Gastrocnemius medialis (tissue), 4 donors: ENCODE measurements at regions of chr3 and their contacts with region 1.

Region 1: GRCh38 chr3:128426128-128426921 is 40.4 kb downstream of the DNAJB8 start:
- DNase-seq: no peak
- ATAC-seq: peak; percentile 78 to 81
- H3K4me3 ChIP-seq: peak overlapping the region in 3 of 4 donors; percentile 24 to 40 (median 35)
- H3K27ac ChIP-seq: no peak overlapping the region
- H3K4me1 ChIP-seq: no peaks in the 10 kb centered on the region
- H3K27me3 ChIP-seq: peaks cover 0 to 5% (median 0%) of the 10 kb centered on the region in 3 donors
- CTCF ChIP-seq: peak; percentile 68 to 99 (median 94)
- POLR2A ChIP-seq: no peak

Region 2: DNA sequence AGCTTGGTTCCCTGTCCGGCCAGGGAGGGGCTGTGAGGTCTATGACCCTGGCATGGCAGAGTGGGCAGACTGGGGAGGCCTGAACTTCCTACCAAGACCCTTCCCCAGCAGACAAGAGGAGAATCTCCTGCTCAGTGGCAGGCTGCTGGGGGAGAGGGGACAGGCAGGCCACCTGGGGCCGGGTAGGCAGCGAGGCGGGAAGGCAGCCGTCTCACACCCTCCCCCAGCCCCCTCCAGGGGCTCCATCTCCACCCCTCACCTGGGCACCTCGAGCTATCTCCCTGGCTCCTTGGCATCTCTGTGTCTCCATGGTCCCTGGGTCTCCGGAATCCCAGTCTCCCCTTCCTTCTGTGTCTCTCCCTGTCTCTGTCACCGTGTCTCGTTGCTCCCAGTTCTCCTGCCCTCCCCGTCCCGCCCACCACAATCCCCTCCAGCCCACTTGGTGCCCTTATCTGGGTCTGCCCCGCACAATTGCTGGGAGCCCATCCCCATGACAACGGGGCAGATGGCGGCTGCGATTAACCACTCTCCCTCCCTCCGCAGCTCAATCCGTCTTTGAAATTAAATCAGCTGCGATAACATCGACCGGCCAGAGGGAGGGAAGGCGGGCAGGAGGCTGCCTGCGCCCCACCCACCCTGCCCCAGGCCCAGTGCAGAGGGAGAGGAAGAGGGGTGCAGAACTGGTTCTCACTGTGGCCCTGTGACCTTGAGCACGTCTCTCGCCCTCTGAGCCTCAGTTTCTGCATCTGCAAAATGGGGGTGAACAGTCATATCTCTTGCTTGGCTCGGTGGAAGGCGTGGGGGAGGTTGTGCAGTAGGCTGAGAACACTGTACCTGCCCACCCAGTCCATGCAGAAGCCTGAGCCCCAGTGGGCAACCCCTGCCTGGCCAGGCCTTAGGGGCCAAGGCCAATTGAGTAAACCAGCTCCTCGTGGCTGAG is 30.7 kb after region 1 on chr3:
- in situ Hi-C with region 1: no loop called
- intact Hi-C with region 1: no loop called
- DNase-seq: no peak
- ATAC-seq: no peak
- H3K4me3 ChIP-seq: no peak overlapping the region
- H3K27ac ChIP-seq: no peak overlapping the region
- H3K4me1 ChIP-seq: no peaks in the 10 kb centered on the region
- H3K27me3 ChIP-seq: peaks cover 0 to 7% (median 0%) of the 10 kb centered on the region in 3 donors
- CTCF ChIP-seq: no peak
- POLR2A ChIP-seq: no peak

Region 3: GRCh38 chr3:128584412-128585020 is 158.2 kb after region 1 on chr3:
- in situ Hi-C with region 1: loop called in 1 of 4 experiments (anchors 25 kb)
- intact Hi-C with region 1: no loop called
- DNase-seq: peak in 1 of 2 donors; percentile 31
- ATAC-seq: peak; percentile 44 to 64
- H3K4me3 ChIP-seq: no peak overlapping the region
- H3K27ac ChIP-seq: no peak overlapping the region
- H3K4me1 ChIP-seq: no peaks in the 10 kb centered on the region
- H3K27me3 ChIP-seq: no peaks in the 10 kb centered on the region
- CTCF ChIP-seq: peak; percentile 44 to 67 (median 61)
- POLR2A ChIP-seq: no peak

Region 4: DNA sequence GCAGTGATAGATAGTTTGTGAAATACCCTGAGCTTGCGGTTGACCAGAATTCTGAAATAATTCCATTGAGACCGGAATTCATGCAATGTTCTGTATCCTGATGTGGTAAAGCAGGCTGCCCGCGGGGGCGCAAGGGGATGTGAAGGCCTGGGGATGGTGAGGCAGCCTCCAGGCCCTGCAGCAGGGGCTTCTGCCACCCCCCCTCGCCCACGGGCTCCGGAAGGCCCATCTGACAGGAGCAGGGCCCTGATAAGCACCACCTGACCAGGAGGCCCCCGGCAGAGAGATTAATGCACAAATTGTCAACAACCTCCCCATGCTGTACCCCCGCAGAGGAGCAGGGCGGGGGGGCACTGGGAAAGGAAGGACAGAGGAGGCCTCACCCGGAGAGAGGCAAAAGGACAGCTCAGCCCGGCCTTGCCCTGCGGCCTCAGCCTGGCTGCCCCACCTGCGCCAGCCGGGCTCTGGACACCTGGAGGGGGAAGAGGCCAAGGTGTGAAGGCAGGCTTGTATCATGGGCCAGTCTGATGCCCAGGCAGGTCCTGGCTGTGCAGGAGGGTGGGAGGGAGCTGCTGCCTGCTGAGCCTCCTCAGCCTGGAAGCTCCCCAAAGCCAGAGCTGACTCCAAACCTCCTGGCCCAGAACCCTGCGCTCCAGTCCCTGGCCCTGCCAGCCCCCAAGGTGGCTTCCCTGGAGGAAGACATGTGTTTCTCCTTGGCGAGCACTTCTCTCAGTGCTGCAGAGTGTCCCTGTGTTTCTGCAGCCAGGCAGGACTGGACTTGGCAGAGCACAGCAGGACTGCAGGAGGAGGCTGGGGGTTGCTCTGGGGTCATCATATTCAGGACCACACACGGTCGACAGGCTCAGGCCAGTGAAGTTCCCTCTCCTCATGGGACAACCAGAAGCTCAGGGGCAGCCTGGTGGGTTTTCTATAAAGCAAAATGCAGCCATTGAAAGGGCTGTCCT is 177.8 kb after region 1 on chr3:
- in situ Hi-C with region 1: loop called (anchors 10 to 25 kb)
- intact Hi-C with region 1: loop called (anchors 1 kb)
- DNase-seq: no peak
- ATAC-seq: no peak
- H3K4me3 ChIP-seq: no peak overlapping the region
- H3K27ac ChIP-seq: no peak overlapping the region
- H3K4me1 ChIP-seq: peaks cover 7 to 13% of the 10 kb centered on the region in 2 donors
- H3K27me3 ChIP-seq: no peaks in the 10 kb centered on the region
- CTCF ChIP-seq: no peak
- POLR2A ChIP-seq: no peak

Region 5: DNA sequence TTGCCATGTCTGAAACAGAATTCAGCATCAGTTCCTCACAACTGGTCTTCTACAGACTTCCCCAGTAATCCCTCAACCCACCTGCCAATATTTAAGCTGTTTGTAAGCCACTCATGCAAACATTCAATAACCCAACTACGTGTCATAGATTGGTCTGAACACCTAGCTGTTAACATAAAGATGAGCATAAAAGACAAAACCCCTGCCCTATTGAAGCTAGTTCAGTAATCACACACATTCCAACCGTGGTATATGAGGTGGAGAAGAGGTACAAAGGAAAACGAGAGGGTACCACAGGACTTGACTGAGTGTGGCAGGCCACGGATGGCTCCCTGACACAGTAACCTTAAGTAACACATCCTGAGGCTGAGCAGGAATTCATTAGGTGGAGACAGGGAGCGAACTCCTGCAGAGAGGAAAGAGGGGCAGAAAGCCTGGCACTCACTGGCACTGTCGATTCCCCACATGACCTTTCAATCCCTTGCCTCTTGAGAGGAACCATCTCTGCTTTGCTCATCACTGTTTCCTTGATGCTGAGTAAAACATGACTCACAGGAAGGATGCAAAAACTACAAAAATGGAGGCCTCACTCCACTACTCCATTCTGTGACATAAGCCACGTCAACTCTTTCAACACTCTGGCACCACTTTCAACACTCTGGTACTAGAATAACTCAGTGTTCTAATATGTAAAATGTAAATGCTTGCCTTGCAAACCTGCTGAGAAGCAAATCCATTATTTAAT is 193.0 kb after region 1 on chr3:
- in situ Hi-C with region 1: no loop called
- intact Hi-C with region 1: no loop called
- DNase-seq: no peak
- ATAC-seq: no peak
- H3K4me3 ChIP-seq: peak overlapping the region in 1 of 4 donors; percentile 77
- H3K27ac ChIP-seq: peak overlapping the region; percentile 85 to 95 (median 90)
- H3K4me1 ChIP-seq: peaks cover 33% of the 10 kb centered on the region in 2 donors
- H3K27me3 ChIP-seq: no peaks in the 10 kb centered on the region
- CTCF ChIP-seq: no peak
- POLR2A ChIP-seq: no peak